PC-9 (cell line): ENCODE measurements at regions of chr1 and their contacts with region 1.

Region 1: GRCh38 chr1:243850452-243851256 is 611 bp upstream of the AKT3 start:
- DNase-seq: peak; percentile 70 to 92
- H3K4me3 ChIP-seq: peak overlapping the region; percentile 69
- H3K27ac ChIP-seq: peak overlapping the region; percentile 85
- H3K4me1 ChIP-seq: peaks cover 49% of the 10 kb centered on the region
- H3K27me3 ChIP-seq: no peaks in the 10 kb centered on the region
- CTCF ChIP-seq: no peak

Region 2: DNA sequence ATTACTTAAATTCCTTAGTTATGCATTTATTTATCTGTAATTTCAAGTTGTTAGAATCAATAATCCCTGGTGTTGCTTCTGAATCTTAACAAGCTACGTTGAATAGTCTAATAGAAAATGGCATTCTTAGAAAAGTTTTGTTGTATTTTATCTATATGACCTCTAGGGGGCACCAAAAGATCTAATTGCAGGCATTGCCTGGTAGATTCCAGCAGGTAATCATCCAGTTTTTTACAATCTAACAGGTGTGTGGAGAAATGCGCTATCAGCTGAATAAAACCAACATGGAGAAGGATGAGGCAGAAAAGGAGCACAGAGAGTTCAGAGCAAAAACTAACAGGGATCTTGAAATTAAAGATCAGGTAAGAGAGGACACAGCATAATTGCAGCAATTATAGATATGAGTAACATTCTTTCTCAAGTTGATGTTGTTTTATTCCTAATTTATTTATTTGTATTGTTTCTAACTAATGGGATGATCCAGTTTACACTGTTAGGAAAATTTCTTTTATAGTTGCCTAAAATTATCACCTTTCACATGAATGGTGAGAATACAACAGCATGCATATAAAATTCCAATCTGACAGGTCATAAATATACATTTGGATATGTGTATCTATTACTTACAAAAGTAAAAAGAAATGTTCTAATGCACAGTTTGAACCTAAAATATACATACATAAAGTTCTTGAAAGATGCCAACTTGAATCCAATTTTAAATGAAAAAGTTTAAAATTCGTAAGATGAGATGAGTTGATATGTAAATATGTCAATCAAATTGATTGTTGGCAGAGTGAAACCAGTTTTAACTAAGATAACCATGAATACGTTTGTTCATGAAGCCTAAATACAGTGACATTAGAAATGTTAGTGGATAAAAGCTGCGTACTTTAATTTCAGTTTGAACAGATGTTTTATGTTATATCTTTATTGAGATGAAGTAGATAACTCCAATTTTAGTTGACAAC is 506.4 kb before region 1 on chr1:
- CTCF ChIA-PET with region 1: no interaction called
- POLR2A ChIA-PET with region 1: no interaction called
- intact Hi-C with region 1: loop called (anchors 10 kb)
- DNase-seq: peak in 1 of 2 experiments; percentile 48
- H3K4me3 ChIP-seq: no peak overlapping the region
- H3K27ac ChIP-seq: no peak overlapping the region
- H3K4me1 ChIP-seq: no peaks in the 10 kb centered on the region
- H3K27me3 ChIP-seq: no peaks in the 10 kb centered on the region
- CTCF ChIP-seq: peak; percentile 87

Region 3: GRCh38 chr1:243718893-243719292 is 131.8 kb before region 1 on chr1:
- CTCF ChIA-PET with region 1: no interaction called
- POLR2A ChIA-PET with region 1: no interaction called
- intact Hi-C with region 1: loop called (anchors 5 kb)
- DNase-seq: peak in 1 of 2 experiments; percentile 76
- H3K4me3 ChIP-seq: no peak overlapping the region
- H3K27ac ChIP-seq: peak overlapping the region; percentile 61
- H3K4me1 ChIP-seq: peaks cover 19% of the 10 kb centered on the region
- H3K27me3 ChIP-seq: no peaks in the 10 kb centered on the region
- CTCF ChIP-seq: no peak

Region 4: GRCh38 chr1:243892456-243892855 is 41.8 kb after region 1 on chr1:
- CTCF ChIA-PET with region 1: no interaction called
- POLR2A ChIA-PET with region 1: interaction called, 12 read pairs
- intact Hi-C with region 1: no loop called
- DNase-seq: no peak
- H3K4me3 ChIP-seq: no peak overlapping the region
- H3K27ac ChIP-seq: no peak overlapping the region
- H3K4me1 ChIP-seq: peaks cover 12% of the 10 kb centered on the region
- H3K27me3 ChIP-seq: no peaks in the 10 kb centered on the region
- CTCF ChIP-seq: no peak

Region 5: DNA sequence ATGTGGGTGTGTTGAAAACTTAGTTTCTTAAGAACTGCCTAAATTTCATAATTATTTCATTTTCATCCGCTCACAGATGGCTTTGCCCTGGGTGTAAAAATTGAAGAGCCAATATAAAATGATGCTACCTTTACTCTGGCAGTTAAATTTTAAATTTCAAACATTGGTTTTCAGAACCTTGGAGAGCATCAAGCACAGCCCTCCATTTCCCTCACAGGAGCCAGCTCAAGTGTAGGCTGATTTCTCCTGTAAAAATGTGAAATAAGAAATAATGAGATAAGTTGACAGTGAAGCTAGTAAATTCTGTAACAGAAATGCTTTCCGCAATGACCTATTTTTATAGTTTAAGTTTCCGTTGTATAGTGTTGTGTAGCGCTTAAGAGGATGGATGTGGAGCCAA is 53.2 kb after region 1 on chr1:
- CTCF ChIA-PET with region 1: no interaction called
- POLR2A ChIA-PET with region 1: no interaction called
- intact Hi-C with region 1: no loop called
- DNase-seq: no peak
- H3K4me3 ChIP-seq: no peak overlapping the region
- H3K27ac ChIP-seq: no peak overlapping the region
- H3K4me1 ChIP-seq: peaks cover 17% of the 10 kb centered on the region
- H3K27me3 ChIP-seq: no peaks in the 10 kb centered on the region
- CTCF ChIP-seq: no peak

Region 6: GRCh38 chr1:243926803-243927279 is 76.2 kb after region 1 on chr1:
- CTCF ChIA-PET with region 1: no interaction called
- POLR2A ChIA-PET with region 1: interaction called, 9 read pairs
- intact Hi-C with region 1: loop called (anchors 1 kb)
- DNase-seq: peak; percentile 56 to 100
- H3K4me3 ChIP-seq: no peak overlapping the region
- H3K27ac ChIP-seq: peak overlapping the region; percentile 97
- H3K4me1 ChIP-seq: peaks cover 67% of the 10 kb centered on the region
- H3K27me3 ChIP-seq: no peaks in the 10 kb centered on the region
- CTCF ChIP-seq: no peak